ENCODE measurements at regions of chr17 and their contacts with region 1.

Region 1: GRCh38 chr17:35063514-35064223 is at the start of gene RFFL:
- DNase-seq: peak; percentile 83 to 89
- ATAC-seq: peak; percentile 99
- H3K4me3 ChIP-seq: peak within 1 kb of the TSS; percentile 69
- H3K27ac ChIP-seq: peak within 1 kb of the TSS; percentile 94
- H3K4me1 ChIP-seq: peaks cover 24% of the 10 kb centered on the region
- H3K27me3 ChIP-seq: no peaks in the 10 kb centered on the region
- CTCF ChIP-seq: no peak
- total RNA-seq, gene RFFL: 23.6 to 39.5 (median 31.1) TPM

Region 2: DNA sequence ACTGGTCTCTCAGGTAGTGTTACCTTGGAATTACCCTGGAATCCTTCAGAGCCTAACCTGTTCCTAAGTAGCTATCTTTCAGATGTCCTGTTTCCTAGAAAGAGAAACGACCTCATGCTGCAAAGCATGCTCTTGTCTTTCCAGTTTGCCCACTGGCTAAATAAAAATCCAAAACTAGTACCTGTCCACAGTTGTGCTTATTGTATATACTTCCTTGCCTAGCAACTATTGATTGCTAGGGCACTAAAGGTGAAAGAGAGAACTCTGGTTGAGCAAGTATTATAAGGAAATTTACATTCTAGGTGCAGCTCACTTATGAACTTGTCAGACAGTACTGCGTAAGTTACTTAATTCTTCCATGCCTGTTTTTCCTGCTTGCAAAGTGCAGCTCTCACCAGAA is 44.9 kb before region 1 on chr17:
- intact Hi-C with region 1: loop called in 1 of 2 experiments (anchors 5 kb)
- DNase-seq: no peak
- ATAC-seq: no peak
- H3K4me3 ChIP-seq: no peak overlapping the region
- H3K27ac ChIP-seq: no peak overlapping the region
- H3K4me1 ChIP-seq: peaks cover 13% of the 10 kb centered on the region
- H3K27me3 ChIP-seq: no peaks in the 10 kb centered on the region
- CTCF ChIP-seq: no peak

Region 3: GRCh38 chr17:35103271-35103670 is 39.6 kb after region 1 on chr17:
- intact Hi-C with region 1: no loop called
- DNase-seq: no peak
- ATAC-seq: no peak
- H3K4me3 ChIP-seq: no peak overlapping the region
- H3K27ac ChIP-seq: no peak overlapping the region
- H3K4me1 ChIP-seq: no peaks in the 10 kb centered on the region
- H3K27me3 ChIP-seq: no peaks in the 10 kb centered on the region
- CTCF ChIP-seq: no peak